CD4-positive, alpha-beta memory T cell (primary cell): ENCODE measurements at regions of chr14 and their contacts with region 1.

Region 1: GRCh38 chr14:75654127-75654732 is 6.4 kb downstream of the ERG28 start:
- DNase-seq: peak; percentile 71 to 79 (median 74)
- H3K4me3 ChIP-seq: no peak overlapping the region
- H3K4me3 Mint-ChIP-seq: no peak overlapping the region
- H3K27ac ChIP-seq: no peak overlapping the region
- H3K27ac Mint-ChIP-seq: peak overlapping the region in 4 of 7 donors; percentile 5 to 53 (median 36)
- H3K4me1 ChIP-seq: peaks cover 7% of the 10 kb centered on the region
- H3K4me1 Mint-ChIP-seq: peaks cover 4 to 16% (median 9%) of the 10 kb centered on the region in 4 donors
- H3K27me3 ChIP-seq: no peaks in the 10 kb centered on the region
- H3K27me3 Mint-ChIP-seq: no peaks in the 10 kb centered on the region

Region 2: GRCh38 chr14:75307700-75308379 is 346.4 kb before region 1 on chr14:
- CTCF ChIA-PET with region 1: interaction called, 22 read pairs
- POLR2A ChIA-PET with region 1: no interaction called
- intact Hi-C with region 1: loop called (anchors 1 kb)
- DNase-seq: peak; percentile 56 to 68 (median 63)
- H3K4me3 ChIP-seq: no peak overlapping the region
- H3K4me3 Mint-ChIP-seq: peak overlapping the region in 1 of 8 donors; percentile 26
- H3K27ac ChIP-seq: no peak overlapping the region
- H3K27ac Mint-ChIP-seq: no peak overlapping the region
- H3K4me1 ChIP-seq: peaks cover 6% of the 10 kb centered on the region
- H3K4me1 Mint-ChIP-seq: peaks cover 4 to 19% (median 8%) of the 10 kb centered on the region in 4 donors
- H3K27me3 ChIP-seq: no peaks in the 10 kb centered on the region
- H3K27me3 Mint-ChIP-seq: peaks cover 1 to 3% of the 10 kb centered on the region in 2 donors

Region 3: DNA sequence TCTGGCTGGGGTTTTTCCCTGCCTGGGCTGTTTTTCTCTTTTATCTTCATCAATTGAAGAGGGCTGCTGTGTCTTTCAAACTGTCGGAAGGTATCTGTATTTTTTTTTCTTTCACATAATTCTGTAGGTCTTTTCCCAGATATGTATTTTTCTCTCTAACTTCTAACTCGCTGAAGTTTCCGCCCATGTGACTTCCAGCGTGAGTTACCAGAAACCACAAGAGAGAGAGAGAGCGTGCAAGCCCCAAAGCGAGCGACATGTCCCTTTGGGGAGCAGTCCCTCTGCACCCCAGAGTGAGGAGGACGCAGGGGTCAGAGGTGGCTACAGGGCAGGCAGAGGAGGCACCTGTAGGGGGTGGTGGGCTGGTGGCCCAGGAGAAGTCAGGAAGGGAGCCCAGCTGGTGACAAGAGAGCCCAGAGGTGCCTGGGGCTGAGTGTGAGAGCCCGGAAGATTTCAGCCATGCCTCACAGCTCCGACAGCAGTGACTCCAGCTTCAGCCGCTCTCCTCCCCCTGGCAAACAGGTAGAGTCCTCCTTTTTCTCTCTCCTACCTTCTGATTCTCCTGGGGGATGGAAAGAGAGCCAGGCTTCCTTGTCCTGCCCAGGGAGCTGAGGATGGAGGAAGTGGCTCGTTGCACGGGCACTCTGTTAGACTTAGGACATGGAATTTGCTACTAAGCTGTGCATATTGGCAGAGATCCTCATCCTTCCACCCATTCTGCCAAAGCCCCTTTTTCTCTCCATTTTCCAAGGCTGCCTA is 131.8 kb before region 1 on chr14 and contains the start of gene BATF:
- CTCF ChIA-PET with region 1: interaction called, 10 read pairs
- POLR2A ChIA-PET with region 1: interaction called, 6 read pairs
- intact Hi-C with region 1: no loop called
- DNase-seq: peak; percentile 79 to 90 (median 82)
- H3K4me3 ChIP-seq: peak within 1 kb of the TSS; percentile 81 to 90
- H3K4me3 Mint-ChIP-seq: peak within 1 kb of the TSS; percentile 96 to 100 (median 99)
- H3K27ac ChIP-seq: peak within 1 kb of the TSS; percentile 88
- H3K27ac Mint-ChIP-seq: peak within 1 kb of the TSS; percentile 94 to 99 (median 98)
- H3K4me1 ChIP-seq: peaks cover 69% of the 10 kb centered on the region
- H3K4me1 Mint-ChIP-seq: peaks cover 47 to 84% (median 65%) of the 10 kb centered on the region in 4 donors
- H3K27me3 ChIP-seq: no peaks in the 10 kb centered on the region
- H3K27me3 Mint-ChIP-seq: no peaks in the 10 kb centered on the region
- total RNA-seq, gene BATF: 17.1 to 20.6 TPM

Region 4: DNA sequence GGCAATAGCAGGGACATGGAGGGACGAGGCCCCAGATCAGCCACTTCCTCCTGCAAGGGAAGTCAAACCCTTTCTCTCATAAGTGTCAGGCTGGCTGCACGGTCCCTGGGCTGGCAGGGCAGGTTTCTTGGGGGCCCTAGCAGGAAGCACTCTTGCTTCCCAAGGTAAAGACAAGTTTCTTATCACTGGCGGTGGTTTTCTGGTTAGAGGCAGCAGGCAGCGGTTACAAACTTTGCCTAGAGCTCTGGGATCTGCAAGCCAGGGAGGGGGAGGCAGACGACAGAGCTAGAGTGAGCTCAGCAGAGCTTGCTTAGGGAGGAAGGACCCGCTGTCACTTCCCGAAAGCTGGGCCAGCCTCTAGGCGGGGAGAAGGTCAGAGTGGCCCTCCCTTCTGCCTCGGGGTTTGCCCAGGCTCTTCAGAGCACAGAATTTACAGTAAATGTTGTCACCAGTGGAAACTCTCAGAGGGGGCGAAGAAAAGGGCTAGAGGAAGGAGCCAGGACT is 111.6 kb before region 1 on chr14:
- CTCF ChIA-PET with region 1: interaction called, 12 read pairs
- POLR2A ChIA-PET with region 1: no interaction called
- intact Hi-C with region 1: no loop called
- DNase-seq: peak; percentile 67 to 93 (median 71)
- H3K4me3 ChIP-seq: peak overlapping the region; percentile 34 to 42
- H3K4me3 Mint-ChIP-seq: peak overlapping the region; percentile 66 to 89 (median 82)
- H3K27ac ChIP-seq: peak overlapping the region; percentile 94
- H3K27ac Mint-ChIP-seq: peak overlapping the region; percentile 96 to 99 (median 97)
- H3K4me1 ChIP-seq: peaks cover 71% of the 10 kb centered on the region
- H3K4me1 Mint-ChIP-seq: peaks cover 48 to 79% (median 67%) of the 10 kb centered on the region in 4 donors
- H3K27me3 ChIP-seq: no peaks in the 10 kb centered on the region
- H3K27me3 Mint-ChIP-seq: no peaks in the 10 kb centered on the region

Region 5: GRCh38 chr14:75640879-75641278 is 13.4 kb before region 1 on chr14:
- CTCF ChIA-PET with region 1: interaction called, 11 read pairs
- POLR2A ChIA-PET with region 1: no interaction called
- intact Hi-C with region 1: no loop called
- DNase-seq: no peak
- H3K4me3 ChIP-seq: no peak overlapping the region
- H3K4me3 Mint-ChIP-seq: no peak overlapping the region
- H3K27ac ChIP-seq: no peak overlapping the region
- H3K27ac Mint-ChIP-seq: peak overlapping the region in 1 of 7 donors; percentile 31
- H3K4me1 ChIP-seq: no peaks in the 10 kb centered on the region
- H3K4me1 Mint-ChIP-seq: no peaks in the 10 kb centered on the region
- H3K27me3 ChIP-seq: no peaks in the 10 kb centered on the region
- H3K27me3 Mint-ChIP-seq: no peaks in the 10 kb centered on the region

Region 6: GRCh38 chr14:75675265-75675960 is 21.2 kb after region 1 on chr14:
- CTCF ChIA-PET with region 1: interaction called, 15 read pairs
- POLR2A ChIA-PET with region 1: no interaction called
- intact Hi-C with region 1: no loop called
- DNase-seq: no peak
- H3K4me3 ChIP-seq: no peak overlapping the region
- H3K4me3 Mint-ChIP-seq: no peak overlapping the region
- H3K27ac ChIP-seq: no peak overlapping the region
- H3K27ac Mint-ChIP-seq: peak overlapping the region in 1 of 7 donors; percentile 54
- H3K4me1 ChIP-seq: no peaks in the 10 kb centered on the region
- H3K4me1 Mint-ChIP-seq: peaks cover 0 to 18% (median 6%) of the 10 kb centered on the region in 4 donors
- H3K27me3 ChIP-seq: no peaks in the 10 kb centered on the region
- H3K27me3 Mint-ChIP-seq: no peaks in the 10 kb centered on the region